ENCODE measurements at regions of chr2 and their contacts with region 1.

Region 1: GRCh38 chr2:219229305-219230058 is at the starts of genes ANKZF1 and ATG9A:
- DNase-seq: peak; percentile 99 to 100
- ATAC-seq: peak; percentile 96 to 98
- H3K4me3 ChIP-seq: peak within 1 kb of the TSS; percentile 73 to 95 (median 90)
- H3K27ac ChIP-seq: peak within 1 kb of the TSS; percentile 85 to 99 (median 90)
- H3K4me1 ChIP-seq: peaks cover 22 to 27% of the 10 kb centered on the region in 2 donors
- H3K27me3 ChIP-seq: no peaks in the 10 kb centered on the region
- CTCF ChIP-seq: peak in 1 of 5 experiments; percentile 17
- POLR2A ChIP-seq: peak; percentile 93 to 95
- total RNA-seq, gene ANKZF1: 13.0 to 23.0 (median 19.1) TPM
- total RNA-seq, gene ATG9A: 111 to 208 (median 176) TPM

Region 2: DNA sequence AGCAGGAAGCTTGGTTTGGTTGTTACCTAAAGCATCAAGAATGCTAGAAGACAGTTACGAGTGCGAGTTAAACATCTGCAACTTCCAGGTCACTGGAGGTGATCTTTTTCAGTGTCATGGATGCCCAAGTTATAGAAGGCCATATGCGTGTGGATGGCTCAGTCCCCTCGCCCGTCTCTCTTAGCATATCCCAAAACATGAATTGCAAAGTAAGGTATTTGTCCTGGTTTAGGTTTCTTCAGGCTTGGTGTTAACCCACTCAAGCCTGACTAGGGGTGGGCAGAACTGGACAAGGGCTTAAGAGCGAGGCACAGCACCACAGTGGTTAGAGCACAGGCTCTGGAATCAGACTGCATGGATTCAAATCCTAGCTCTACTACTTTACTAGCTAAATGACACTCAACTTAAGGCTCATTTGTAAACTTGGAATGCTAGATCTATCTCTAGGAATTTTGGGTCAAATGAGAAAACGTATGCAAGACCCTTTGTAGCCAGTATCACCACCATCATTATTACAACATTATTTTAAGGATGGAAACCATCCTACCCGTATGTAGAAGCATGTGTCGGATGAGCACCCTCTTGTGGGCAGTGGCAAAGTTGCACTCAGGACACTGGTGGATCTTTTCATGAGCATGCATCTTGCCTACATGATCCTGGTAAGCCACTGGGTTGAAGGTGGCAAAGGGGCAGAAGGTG is 581.2 kb before region 1 on chr2:
- in situ Hi-C with region 1: no loop called
- intact Hi-C with region 1: no loop called
- DNase-seq: peak in 1 of 2 donors; percentile 45
- ATAC-seq: peak; percentile 65 to 71
- H3K4me3 ChIP-seq: no peak overlapping the region
- H3K27ac ChIP-seq: peak overlapping the region in 1 of 4 donors; percentile 18
- H3K4me1 ChIP-seq: no peaks in the 10 kb centered on the region
- H3K27me3 ChIP-seq: no peaks in the 10 kb centered on the region
- CTCF ChIP-seq: peak; percentile 54 to 79 (median 71)
- POLR2A ChIP-seq: no peak

Region 3: DNA sequence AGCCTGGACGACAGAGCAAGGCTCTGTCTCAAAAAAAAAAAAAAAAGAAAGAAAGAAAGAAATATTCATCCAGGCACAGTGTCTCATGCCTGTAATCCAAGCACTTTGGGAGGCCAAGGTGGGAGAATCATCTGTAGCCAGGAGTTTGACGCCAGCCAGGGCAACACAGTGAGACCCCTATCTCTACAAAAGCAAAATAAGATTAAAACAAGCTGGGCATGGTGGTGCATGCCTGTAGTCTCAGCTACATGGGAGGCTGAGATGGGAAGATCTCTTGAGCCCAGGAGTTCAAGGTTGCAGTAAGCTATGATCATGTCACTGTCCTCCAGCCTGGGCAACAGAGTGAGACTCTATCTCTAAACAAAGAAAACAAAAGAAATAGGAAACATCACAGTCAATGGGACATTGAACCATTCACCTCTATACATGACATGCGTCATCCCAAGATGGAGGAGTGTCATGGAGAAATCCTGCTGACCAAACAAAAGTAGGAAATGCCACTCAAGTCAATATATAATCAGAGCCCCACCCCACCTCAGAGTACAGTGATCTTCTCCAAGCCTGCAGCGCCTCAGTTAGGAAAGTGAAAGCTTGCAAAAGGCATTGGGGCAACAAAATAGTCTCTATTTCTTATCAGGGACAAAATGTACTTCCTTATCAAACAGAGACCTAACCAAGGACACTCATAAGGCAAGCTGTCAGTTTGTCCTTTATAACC is 254.3 kb before region 1 on chr2:
- in situ Hi-C with region 1: no loop called
- intact Hi-C with region 1: no loop called
- DNase-seq: no peak
- ATAC-seq: no peak
- H3K4me3 ChIP-seq: no peak overlapping the region
- H3K27ac ChIP-seq: no peak overlapping the region
- H3K4me1 ChIP-seq: peaks cover 0 to 2% of the 10 kb centered on the region in 2 donors
- H3K27me3 ChIP-seq: peaks cover 32 to 67% (median 40%) of the 10 kb centered on the region in 3 donors
- CTCF ChIP-seq: no peak
- POLR2A ChIP-seq: no peak

Region 4: DNA sequence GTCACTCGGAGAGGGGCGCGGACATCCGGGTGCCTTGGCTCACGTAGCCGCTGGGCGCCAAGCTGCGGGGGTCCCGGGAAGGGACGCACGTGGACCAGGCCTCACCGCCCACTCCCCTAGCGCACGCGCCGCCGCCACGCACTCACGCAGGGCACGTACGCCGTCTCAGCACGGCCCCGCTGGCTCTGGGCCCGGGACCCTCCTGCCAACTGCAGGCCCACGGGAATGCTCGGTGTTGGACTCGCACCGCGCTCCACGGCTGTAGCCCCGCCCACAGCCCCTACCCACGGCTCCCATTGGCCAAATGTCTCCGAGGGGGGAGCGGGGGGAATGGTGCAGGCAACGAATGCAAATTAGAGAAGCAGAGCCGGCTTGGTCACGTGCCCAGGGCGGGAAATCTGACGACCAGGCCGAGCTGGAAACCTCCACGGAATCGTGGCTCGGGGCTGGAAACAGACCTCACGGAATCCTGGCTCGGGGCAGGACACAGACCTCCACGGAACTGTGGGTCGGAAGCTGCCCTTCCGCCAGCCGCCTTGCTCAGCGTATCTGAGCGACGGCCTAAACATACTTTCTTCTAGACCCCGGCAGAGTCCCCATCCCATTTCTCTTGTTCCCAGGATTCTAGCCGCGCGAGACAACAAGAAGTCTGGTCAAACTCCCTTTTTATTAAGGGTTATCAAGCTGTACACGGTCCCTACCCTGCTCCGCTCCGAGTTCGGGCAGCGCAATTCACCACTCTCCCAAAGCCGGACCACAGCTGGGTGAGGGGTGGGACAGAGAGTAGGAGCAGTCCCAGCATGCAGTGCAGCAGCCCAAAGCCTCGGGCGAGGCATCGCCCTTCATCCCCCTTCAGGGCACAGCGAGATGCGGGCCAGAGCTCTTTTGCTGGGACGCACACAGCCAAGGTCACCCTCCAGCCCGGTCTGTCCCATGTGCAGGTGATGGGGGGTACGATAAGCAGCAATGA is 10.5 kb before region 1 on chr2 and contains the start of gene ABCB6:
- in situ Hi-C with region 1: no loop called
- intact Hi-C with region 1: loop called (anchors 1 kb)
- DNase-seq: peak; percentile 96 to 98
- ATAC-seq: peak; percentile 82 to 84
- H3K4me3 ChIP-seq: peak within 1 kb of the TSS; percentile 55 to 74 (median 64)
- H3K27ac ChIP-seq: peak within 1 kb of the TSS; percentile 87 to 99 (median 94)
- H3K4me1 ChIP-seq: peaks cover 19 to 29% of the 10 kb centered on the region in 2 donors
- H3K27me3 ChIP-seq: no peaks in the 10 kb centered on the region
- CTCF ChIP-seq: no peak
- POLR2A ChIP-seq: peak; percentile 54 to 78
- total RNA-seq, gene ABCB6: 15.0 to 45.8 (median 31.8) TPM

Region 5: DNA sequence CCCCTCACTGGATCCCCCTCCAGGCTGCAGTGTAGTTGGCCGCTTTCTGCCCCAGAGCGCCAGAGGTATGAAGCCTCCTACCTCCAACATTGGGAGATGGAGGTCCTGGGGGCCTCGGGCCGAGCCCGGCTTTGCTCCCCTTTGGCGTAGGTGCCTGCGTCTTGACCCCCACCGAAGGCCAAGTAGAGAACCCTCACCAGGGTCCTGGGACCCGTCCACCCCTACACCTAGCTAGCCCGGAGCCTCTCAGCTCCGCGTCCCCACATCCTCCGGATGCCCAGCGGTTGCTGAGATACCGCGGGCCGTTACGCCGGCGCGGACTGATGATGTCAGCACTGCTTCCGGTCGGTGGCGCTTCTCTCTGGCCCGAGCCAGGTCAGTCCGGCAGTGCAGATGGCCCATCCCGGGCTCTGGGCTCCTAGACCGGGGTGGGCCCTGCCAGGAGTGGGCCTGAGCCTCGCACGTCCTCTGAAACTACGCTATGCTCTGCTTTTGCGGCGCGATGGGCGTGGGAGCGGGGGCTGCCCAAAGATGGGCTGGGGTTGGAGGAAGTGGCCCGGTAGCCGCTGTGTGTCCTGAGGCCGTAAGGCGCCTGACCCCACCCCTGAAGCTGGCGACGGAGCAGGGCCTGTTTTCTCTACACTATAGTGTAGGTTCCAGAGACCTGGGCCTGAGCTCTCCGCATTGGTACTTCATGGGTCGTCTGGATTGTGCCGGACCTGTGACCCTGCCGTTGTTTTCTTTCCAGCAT is 15.8 kb after region 1 on chr2 and contains the starts of genes GLB1L and STK16:
- in situ Hi-C with region 1: no loop called
- intact Hi-C with region 1: loop called (anchors 1 kb)
- DNase-seq: peak; percentile 85 to 91
- ATAC-seq: peak; percentile 89 to 90
- H3K4me3 ChIP-seq: peak within 1 kb of the TSS; percentile 65 to 98 (median 82)
- H3K27ac ChIP-seq: peak within 1 kb of the TSS; percentile 83 to 99 (median 96)
- H3K4me1 ChIP-seq: peaks cover 43 to 47% of the 10 kb centered on the region in 2 donors
- H3K27me3 ChIP-seq: no peaks in the 10 kb centered on the region
- CTCF ChIP-seq: no peak
- POLR2A ChIP-seq: peak; percentile 76 to 89
- total RNA-seq, gene GLB1L: 1.0 to 3.6 (median 1.3) TPM
- total RNA-seq, gene STK16: 4.4 to 19.3 (median 14.2) TPM

Region 6: GRCh38 chr2:219253753-219254590 is 24.5 kb after region 1 on chr2 and contains the start of gene TUBA4A:
- in situ Hi-C with region 1: no loop called
- intact Hi-C with region 1: loop called (anchors 1 kb)
- DNase-seq: peak; percentile 76 to 88
- ATAC-seq: peak; percentile 69 to 72
- H3K4me3 ChIP-seq: peak within 1 kb of the TSS; percentile 68 to 88 (median 76)
- H3K27ac ChIP-seq: peak within 1 kb of the TSS; percentile 91 to 99 (median 96)
- H3K4me1 ChIP-seq: peaks cover 36 to 53% of the 10 kb centered on the region in 2 donors
- H3K27me3 ChIP-seq: no peaks in the 10 kb centered on the region
- CTCF ChIP-seq: peak in 3 of 5 experiments; percentile 23 to 34 (median 30)
- POLR2A ChIP-seq: peak; percentile 98
- total RNA-seq, gene TUBA4A: 351 to 797 (median 386) TPM

Region 7: GRCh38 chr2:219498280-219499057 is 269.0 kb after region 1 on chr2 and contains the start of gene GMPPA:
- in situ Hi-C with region 1: no loop called
- intact Hi-C with region 1: loop called (anchors 5 kb)
- DNase-seq: peak; percentile 97 to 98
- ATAC-seq: peak; percentile 82 to 88
- H3K4me3 ChIP-seq: peak within 1 kb of the TSS; percentile 66 to 87 (median 74)
- H3K27ac ChIP-seq: peak within 1 kb of the TSS; percentile 91 to 100 (median 96)
- H3K4me1 ChIP-seq: peaks cover 39 to 46% of the 10 kb centered on the region in 2 donors
- H3K27me3 ChIP-seq: no peaks in the 10 kb centered on the region
- CTCF ChIP-seq: peak in 1 of 5 experiments; percentile 25
- POLR2A ChIP-seq: peak; percentile 83 to 89
- total RNA-seq, gene GMPPA: 18.0 to 25.8 (median 24.4) TPM

Measured in gastrocnemius medialis (tissue), 4 donors.